ENCODE measurements at regions of chr5 and their contacts with region 1.

Region 1: GRCh38 chr5:154038707-154039457 is at the starts of genes FAM114A2 and MFAP3:
- DNase-seq: peak; percentile 92
- H3K4me3 Mint-ChIP-seq: peak within 1 kb of the TSS; percentile 99
- H3K27ac Mint-ChIP-seq: peak within 1 kb of the TSS; percentile 96
- H3K4me1 Mint-ChIP-seq: peaks cover 49% of the 10 kb centered on the region
- H3K27me3 Mint-ChIP-seq: no peaks in the 10 kb centered on the region
- total RNA-seq, gene FAM114A2: 27.0 to 28.5 TPM
- total RNA-seq, gene MFAP3: 23.5 to 25.5 TPM

Region 2: GRCh38 chr5:153629027-153629895 is 409.6 kb before region 1 on chr5:
- CTCF ChIA-PET with region 1: no interaction called
- POLR2A ChIA-PET with region 1: no interaction called
- DNase-seq: no peak
- H3K4me3 Mint-ChIP-seq: no peak overlapping the region
- H3K27ac Mint-ChIP-seq: no peak overlapping the region
- H3K4me1 Mint-ChIP-seq: no peaks in the 10 kb centered on the region
- H3K27me3 Mint-ChIP-seq: no peaks in the 10 kb centered on the region

Region 3: GRCh38 chr5:153742060-153742459 is 296.8 kb before region 1 on chr5:
- CTCF ChIA-PET with region 1: no interaction called
- POLR2A ChIA-PET with region 1: no interaction called
- DNase-seq: no peak
- H3K4me3 Mint-ChIP-seq: no peak overlapping the region
- H3K27ac Mint-ChIP-seq: no peak overlapping the region
- H3K4me1 Mint-ChIP-seq: no peaks in the 10 kb centered on the region
- H3K27me3 Mint-ChIP-seq: no peaks in the 10 kb centered on the region

Region 4: GRCh38 chr5:154049636-154050035 is 10.8 kb after region 1 on chr5:
- CTCF ChIA-PET with region 1: interaction called, 3 read pairs
- POLR2A ChIA-PET with region 1: interaction called, 31 read pairs
- DNase-seq: no peak
- H3K4me3 Mint-ChIP-seq: no peak overlapping the region
- H3K27ac Mint-ChIP-seq: no peak overlapping the region
- H3K4me1 Mint-ChIP-seq: peaks cover 39% of the 10 kb centered on the region
- H3K27me3 Mint-ChIP-seq: no peaks in the 10 kb centered on the region

Region 5: DNA sequence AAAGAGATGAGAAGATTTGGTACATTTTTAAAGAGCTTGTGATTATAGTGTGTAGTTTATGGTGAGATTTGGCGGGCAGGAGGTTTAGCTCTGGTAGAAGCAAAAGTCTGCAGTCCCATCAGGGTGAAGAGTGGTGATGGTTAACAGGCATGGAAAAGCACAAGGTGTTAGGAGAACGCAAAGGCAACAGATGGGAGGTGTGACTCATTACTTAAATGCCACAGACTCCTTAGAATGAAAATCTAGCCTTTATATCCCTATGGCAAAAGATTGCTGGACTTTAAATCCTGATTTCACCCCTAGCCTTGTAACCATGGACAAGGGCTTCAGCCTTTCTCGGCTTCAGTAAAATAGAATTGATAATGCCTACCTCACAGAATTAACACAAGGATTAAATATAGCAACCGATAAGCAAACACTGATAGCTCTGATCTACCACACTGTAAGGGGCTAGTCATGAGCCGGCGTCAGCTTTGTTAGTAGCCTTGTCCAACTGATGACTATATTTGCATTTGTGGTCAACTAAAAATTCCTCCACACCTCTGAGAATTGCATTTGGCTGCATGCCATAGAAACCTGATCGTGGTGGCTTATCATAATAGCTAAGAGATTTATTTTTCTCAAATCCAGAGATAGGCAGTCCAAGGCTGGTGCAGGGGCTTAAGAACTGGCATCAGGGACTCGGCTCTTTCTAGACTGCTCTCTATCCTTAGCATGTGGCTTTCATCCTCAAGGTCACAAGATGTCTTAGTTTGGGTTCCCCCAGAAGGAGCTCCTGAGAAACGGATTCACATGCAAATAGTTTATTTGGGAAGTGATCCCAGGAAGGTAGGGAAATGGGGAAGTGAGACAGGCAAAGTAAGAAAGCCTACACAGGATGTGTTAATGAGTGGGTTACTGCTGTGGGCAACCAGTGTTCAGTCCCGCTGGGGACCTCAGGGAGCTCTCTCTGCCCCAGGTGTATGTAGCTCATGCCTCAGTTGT is 19.5 kb after region 1 on chr5:
- CTCF ChIA-PET with region 1: interaction called, 10 read pairs
- POLR2A ChIA-PET with region 1: interaction called, 18 read pairs
- DNase-seq: no peak
- H3K4me3 Mint-ChIP-seq: no peak overlapping the region
- H3K27ac Mint-ChIP-seq: peak overlapping the region; percentile 0
- H3K4me1 Mint-ChIP-seq: peaks cover 34% of the 10 kb centered on the region
- H3K27me3 Mint-ChIP-seq: no peaks in the 10 kb centered on the region

Region 6: GRCh38 chr5:154087257-154087656 is 48.4 kb after region 1 on chr5:
- CTCF ChIA-PET with region 1: no interaction called
- POLR2A ChIA-PET with region 1: no interaction called
- DNase-seq: no peak
- H3K4me3 Mint-ChIP-seq: no peak overlapping the region
- H3K27ac Mint-ChIP-seq: no peak overlapping the region
- H3K4me1 Mint-ChIP-seq: peaks cover 4% of the 10 kb centered on the region
- H3K27me3 Mint-ChIP-seq: peaks cover 11% of the 10 kb centered on the region

Region 7: DNA sequence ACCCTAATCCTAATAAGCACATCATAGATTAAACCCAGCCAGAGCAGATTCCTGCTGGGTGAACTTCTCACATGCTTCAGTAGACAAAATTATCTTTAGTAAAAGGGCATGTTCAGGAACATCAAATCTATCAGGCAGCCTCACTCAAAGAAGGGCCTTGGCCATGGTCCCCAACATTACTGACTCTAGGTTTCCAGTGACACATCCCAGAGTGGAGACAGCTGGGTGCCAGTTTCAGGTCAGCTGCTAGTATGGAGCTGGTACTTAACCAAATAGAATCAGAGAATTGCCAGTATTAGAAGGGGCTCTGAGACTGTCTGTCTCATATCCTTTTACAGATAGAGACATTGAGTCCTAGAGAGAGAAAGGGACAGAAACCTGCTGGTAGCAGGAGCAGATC is 107.5 kb after region 1 on chr5:
- CTCF ChIA-PET with region 1: no interaction called
- POLR2A ChIA-PET with region 1: no interaction called
- DNase-seq: no peak
- H3K4me3 Mint-ChIP-seq: no peak overlapping the region
- H3K27ac Mint-ChIP-seq: no peak overlapping the region
- H3K4me1 Mint-ChIP-seq: no peaks in the 10 kb centered on the region
- H3K27me3 Mint-ChIP-seq: peaks cover 11% of the 10 kb centered on the region